IMR-90 (cell line): ENCODE measurements at regions of chr19 and their contacts with region 1.

Region 1: GRCh38 chr19:1652471-1653299 is at the start of gene TCF3:
- DNase-seq: peak; percentile 99
- ATAC-seq: peak; percentile 97
- H3K4me3 ChIP-seq: peak within 1 kb of the TSS; percentile 81
- H3K27ac ChIP-seq: peak within 1 kb of the TSS; percentile 99
- H3K4me1 ChIP-seq: peaks cover 3% of the 10 kb centered on the region; the same call in 1 of the 2 replicates
- H3K27me3 ChIP-seq: no peaks in the 10 kb centered on the region; the same call in 1 of the 2 replicates
- CTCF ChIP-seq: no peak
- POLR2A ChIP-seq: no peak; the same call in 1 of the 2 replicates
- RAD21 ChIP-seq: no peak
- total RNA-seq, gene TCF3: 29.9 and 37.5 TPM in 2 replicates

Region 2: GRCh38 chr19:1315470-1316231 is 337.0 kb before region 1 on chr19:
- CTCF ChIA-PET with region 1: no interaction called
- POLR2A ChIA-PET with region 1: no interaction called
- dilution Hi-C with region 1: no loop called
- in situ Hi-C with region 1: no loop called
- intact Hi-C with region 1: no loop called
- DNase-seq: peak; percentile 25
- ATAC-seq: peak; percentile 94
- H3K4me3 ChIP-seq: 0 out of 2 replicates have a peak overlapping the region, but pooled peaks have one; percentile 5
- H3K27ac ChIP-seq: no peak overlapping the region
- H3K4me1 ChIP-seq: no peaks in the 10 kb centered on the region; the same call in 1 of the 2 replicates
- H3K27me3 ChIP-seq: peaks cover 39% of the 10 kb centered on the region
- CTCF ChIP-seq: peak; percentile 68
- POLR2A ChIP-seq: no peak
- RAD21 ChIP-seq: peak; percentile 65

Region 3: GRCh38 chr19:1568320-1569019 is 84.2 kb before region 1 on chr19 and contains the start of gene MEX3D:
- CTCF ChIA-PET with region 1: no interaction called
- POLR2A ChIA-PET with region 1: no interaction called
- dilution Hi-C with region 1: no loop called
- in situ Hi-C with region 1: no loop called
- intact Hi-C with region 1: loop called (anchors 1 kb)
- DNase-seq: peak; percentile 49
- ATAC-seq: peak; percentile 74
- H3K4me3 ChIP-seq: peak within 1 kb of the TSS; percentile 97
- H3K27ac ChIP-seq: peak within 1 kb of the TSS; percentile 95
- H3K4me1 ChIP-seq: peaks cover 8% of the 10 kb centered on the region
- H3K27me3 ChIP-seq: no peaks in the 10 kb centered on the region; the same call in 1 of the 2 replicates
- CTCF ChIP-seq: no peak
- POLR2A ChIP-seq: no peak
- RAD21 ChIP-seq: no peak
- total RNA-seq, gene MEX3D: 9.1 and 11.9 TPM in 2 replicates

Region 4: GRCh38 chr19:1605236-1606137 is 47.2 kb before region 1 on chr19 and contains the start of gene UQCR11:
- CTCF ChIA-PET with region 1: no interaction called
- POLR2A ChIA-PET with region 1: no interaction called
- dilution Hi-C with region 1: no loop called
- in situ Hi-C with region 1: no loop called
- intact Hi-C with region 1: loop called (anchors 2 kb)
- DNase-seq: peak; percentile 96
- ATAC-seq: peak; percentile 90
- H3K4me3 ChIP-seq: peak within 1 kb of the TSS; percentile 82
- H3K27ac ChIP-seq: peak within 1 kb of the TSS; percentile 89
- H3K4me1 ChIP-seq: peaks cover 2% of the 10 kb centered on the region; the same call in 1 of the 2 replicates
- H3K27me3 ChIP-seq: no peaks in the 10 kb centered on the region
- CTCF ChIP-seq: peak; percentile 67
- POLR2A ChIP-seq: no peak
- RAD21 ChIP-seq: peak; percentile 73
- total RNA-seq, gene UQCR11: 22.8 and 29.2 TPM in 2 replicates

Region 5: DNA sequence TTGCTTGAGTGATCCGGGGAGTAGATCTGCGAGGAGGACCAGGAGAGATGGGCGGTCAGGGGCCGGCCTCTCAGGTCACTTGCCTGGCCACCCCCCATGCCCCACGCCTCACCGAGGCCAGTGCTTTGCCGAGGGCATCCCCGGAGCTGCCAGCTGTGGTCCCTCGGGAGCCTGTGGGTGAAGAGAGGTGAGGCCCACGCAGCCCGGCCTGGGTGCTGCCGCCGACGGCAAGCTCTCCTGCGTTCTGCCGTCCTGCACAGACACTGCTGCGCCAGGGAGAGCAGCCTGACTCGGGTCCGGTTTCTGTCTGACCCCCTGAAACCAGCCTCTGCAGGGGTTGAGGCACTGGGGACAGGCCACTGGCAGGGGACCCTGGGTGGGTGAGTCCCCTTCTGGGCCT is 31.7 kb before region 1 on chr19:
- CTCF ChIA-PET with region 1: no interaction called
- POLR2A ChIA-PET with region 1: no interaction called
- dilution Hi-C with region 1: no loop called
- in situ Hi-C with region 1: no loop called
- intact Hi-C with region 1: no loop called
- DNase-seq: no peak
- ATAC-seq: no peak
- H3K4me3 ChIP-seq: no peak overlapping the region
- H3K27ac ChIP-seq: no peak overlapping the region
- H3K4me1 ChIP-seq: no peaks in the 10 kb centered on the region
- H3K27me3 ChIP-seq: no peaks in the 10 kb centered on the region
- CTCF ChIP-seq: no peak
- POLR2A ChIP-seq: no peak
- RAD21 ChIP-seq: no peak

Region 6: GRCh38 chr19:1634242-1634937 is 18.3 kb before region 1 on chr19:
- CTCF ChIA-PET with region 1: no interaction called
- POLR2A ChIA-PET with region 1: interaction called, 17 read pairs
- dilution Hi-C with region 1: no loop called
- in situ Hi-C with region 1: no loop called
- intact Hi-C with region 1: no loop called
- DNase-seq: no peak
- ATAC-seq: no peak
- H3K4me3 ChIP-seq: no peak overlapping the region
- H3K27ac ChIP-seq: no peak overlapping the region
- H3K4me1 ChIP-seq: no peaks in the 10 kb centered on the region
- H3K27me3 ChIP-seq: no peaks in the 10 kb centered on the region
- CTCF ChIP-seq: no peak
- POLR2A ChIP-seq: no peak
- RAD21 ChIP-seq: no peak